Esophagus squamous epithelium (tissue), 5 donors: ENCODE measurements at regions of chr18 and their contacts with region 1.

Region 1: DNA sequence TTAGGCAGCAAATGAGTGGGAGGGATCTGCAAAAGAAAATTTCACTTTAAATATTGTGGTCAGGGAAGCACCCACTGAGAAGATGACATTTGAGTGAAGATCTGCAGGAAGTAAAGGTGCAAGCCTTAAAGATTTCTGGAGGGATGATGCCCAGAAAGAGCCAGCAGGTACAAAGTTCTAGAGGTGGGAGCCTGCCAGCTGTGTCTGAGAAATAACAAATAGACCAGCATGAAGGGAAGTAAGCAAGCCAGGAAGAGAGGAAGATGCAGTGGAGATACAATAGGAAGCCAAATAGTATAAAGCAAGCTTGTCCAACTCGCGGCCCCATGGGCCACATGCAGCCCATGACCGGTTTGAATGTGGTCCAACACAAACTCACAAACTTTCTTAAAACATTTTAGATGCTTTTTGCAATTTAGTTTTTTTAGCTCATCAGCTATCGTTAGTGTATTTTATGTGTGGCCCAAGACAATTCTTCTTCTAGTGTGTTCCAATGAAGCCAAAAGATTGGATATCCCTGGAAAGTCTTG is 489.9 kb downstream of the DCC start:
- DNase-seq: no peak
- H3K4me3 ChIP-seq: no peak overlapping the region
- H3K27ac ChIP-seq: no peak overlapping the region
- H3K4me1 ChIP-seq: no peaks in the 10 kb centered on the region
- H3K27me3 ChIP-seq: no peaks in the 10 kb centered on the region
- CTCF ChIP-seq: no peak
- POLR2A ChIP-seq: no peak

Region 2: DNA sequence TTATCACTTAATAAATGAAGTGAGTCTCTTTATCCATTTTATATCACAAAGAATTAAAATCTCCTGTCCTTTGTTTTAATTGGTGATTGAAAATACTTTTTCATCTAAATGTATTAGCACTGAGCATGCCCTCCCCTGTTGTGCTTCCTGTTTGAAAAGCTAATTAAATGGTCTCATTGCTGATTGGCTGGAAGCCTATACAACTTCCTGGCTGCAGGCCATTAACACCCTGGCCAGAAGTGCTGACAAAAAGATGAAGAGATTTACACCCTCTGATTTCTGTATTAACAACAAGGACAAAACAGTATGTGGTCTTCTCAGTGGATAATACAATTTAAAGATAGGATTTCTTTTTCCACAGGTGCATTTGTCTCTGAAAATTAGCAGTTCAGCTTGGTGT is 58.1 kb after region 1 on chr18:
- intact Hi-C with region 1: loop called (anchors 5 kb)
- DNase-seq: no peak
- H3K4me3 ChIP-seq: no peak overlapping the region
- H3K27ac ChIP-seq: no peak overlapping the region
- H3K4me1 ChIP-seq: no peaks in the 10 kb centered on the region
- H3K27me3 ChIP-seq: no peaks in the 10 kb centered on the region
- CTCF ChIP-seq: no peak
- POLR2A ChIP-seq: no peak